Right ventricle myocardium inferior (tissue), 1 donor: ENCODE measurements at regions of chr19 and their contacts with region 1.

Region 1: DNA sequence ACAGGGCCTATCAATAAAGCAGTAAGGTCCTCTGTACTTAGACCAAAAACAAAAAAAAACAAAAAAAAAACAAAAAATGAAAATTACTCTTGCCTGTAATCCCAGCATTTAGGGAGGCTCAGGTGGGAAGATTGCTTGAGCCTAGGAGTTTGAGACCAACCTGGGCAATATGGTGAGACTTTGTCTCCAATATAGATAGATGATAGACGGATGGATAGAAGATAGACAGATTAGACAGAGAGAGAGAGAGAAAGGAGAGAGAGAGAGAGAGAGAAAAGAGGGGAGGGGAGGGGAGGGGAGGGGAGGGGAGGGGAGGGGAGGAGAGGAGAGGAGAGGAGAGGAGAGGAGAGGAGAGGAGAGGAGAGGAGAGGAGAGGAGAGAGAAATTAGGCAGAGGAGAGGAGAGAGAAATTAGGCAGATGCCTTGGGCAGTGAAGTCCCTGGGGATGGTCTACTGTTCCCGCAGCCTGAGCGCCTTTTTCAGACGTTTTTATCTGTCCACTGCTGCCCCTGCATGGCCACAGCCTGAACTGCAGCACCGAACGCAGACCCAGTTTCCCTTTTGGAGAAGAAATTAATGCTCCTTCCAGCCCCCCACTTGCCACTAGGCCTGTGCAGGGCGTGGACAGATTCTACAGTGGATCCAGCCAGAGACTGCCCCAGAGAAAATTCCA is 9.8 kb upstream of the ZNF627 start:
- DNase-seq: peak; percentile 85
- ATAC-seq: peak; percentile 89

Region 2: GRCh38 chr19:11463391-11463790 is 124.0 kb before region 1 on chr19:
- intact Hi-C with region 1: no loop called
- DNase-seq: no peak
- ATAC-seq: no peak

Region 3: DNA sequence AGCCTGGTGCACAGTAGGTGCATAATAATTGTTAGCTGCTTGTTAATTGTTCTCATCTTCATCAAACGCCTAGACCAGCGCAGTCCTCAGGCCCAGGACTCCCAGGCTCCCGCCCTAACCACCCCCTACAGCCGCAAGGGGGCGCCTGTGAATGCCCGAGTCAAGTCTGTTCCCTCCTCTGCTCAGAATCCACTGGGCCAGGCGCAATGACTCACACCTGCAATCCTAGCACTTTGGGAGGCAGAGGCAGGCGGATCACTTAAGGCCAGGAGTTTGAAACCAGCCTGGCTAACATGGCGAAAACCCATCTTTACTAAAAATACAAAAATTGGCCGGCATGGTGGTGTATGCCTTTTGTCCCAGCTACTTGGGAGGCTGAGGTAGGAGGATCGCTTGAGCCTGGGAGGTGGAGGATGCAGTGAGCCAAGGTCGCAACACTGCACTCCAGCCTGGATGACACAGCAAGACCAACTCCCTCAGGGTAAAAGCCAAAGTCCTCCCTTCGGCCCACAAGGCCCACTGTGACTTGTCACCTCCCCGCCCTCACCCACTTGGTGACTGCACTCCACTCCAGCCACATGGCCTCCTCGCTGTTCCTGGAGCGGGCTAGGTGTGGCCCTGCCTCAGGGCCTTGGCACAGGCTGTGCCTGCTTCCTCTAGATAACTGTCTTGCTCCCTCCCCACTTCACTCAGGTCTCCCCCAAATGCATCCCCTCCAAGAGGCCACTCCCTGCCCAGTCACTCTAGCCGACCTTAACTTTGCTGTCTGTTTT is 90.9 kb before region 1 on chr19:
- intact Hi-C with region 1: loop called (anchors 5 kb)
- DNase-seq: peak; percentile 77
- ATAC-seq: no peak

Region 4: GRCh38 chr19:11558881-11559828 is 28.3 kb before region 1 on chr19 and contains the start of gene ELOF1:
- intact Hi-C with region 1: loop called (anchors 2 kb)
- DNase-seq: peak; percentile 99
- ATAC-seq: peak; percentile 99
- total RNA-seq, gene ELOF1: 33.5 TPM

Region 5: GRCh38 chr19:11624069-11624463 is 36.6 kb after region 1 on chr19:
- intact Hi-C with region 1: no loop called
- DNase-seq: no peak
- ATAC-seq: no peak